ENCODE measurements at regions of chr5 and their contacts with region 1.

Region 1: DNA sequence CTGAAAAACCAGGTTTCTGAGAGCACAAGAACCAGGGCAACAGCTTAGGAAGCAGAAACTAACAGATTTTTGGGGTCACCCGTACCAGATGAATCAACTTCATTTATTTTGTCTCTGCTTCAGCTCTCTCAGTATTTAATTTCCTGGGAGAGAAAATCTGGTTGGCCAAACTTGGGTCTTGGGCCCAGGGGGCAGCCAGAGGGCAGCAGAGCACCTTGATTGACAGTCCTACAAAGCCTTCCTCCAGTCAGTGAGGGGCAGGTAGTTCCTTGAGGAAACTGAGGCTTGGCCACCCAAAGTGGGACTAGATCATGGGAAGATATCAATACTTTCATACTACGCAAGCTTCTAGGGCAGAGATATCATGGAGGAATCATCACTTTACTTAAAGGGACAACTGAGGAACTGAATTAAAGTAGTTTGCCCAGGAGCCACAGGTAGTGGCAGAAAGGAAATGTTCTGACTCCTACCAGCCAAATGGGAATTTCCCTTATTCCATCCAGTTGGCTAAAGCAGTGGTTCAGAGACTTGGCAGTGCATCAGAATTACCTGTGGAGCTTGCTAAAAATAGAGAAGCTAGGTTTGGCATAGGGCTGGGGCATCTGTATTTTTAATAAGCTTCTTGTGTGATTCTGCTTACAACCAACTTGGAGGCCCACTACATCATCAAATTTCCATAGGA is 21.5 kb upstream of the ARHGAP26 start:
- DNase-seq: peak in 1 of 2 experiments; percentile 66
- H3K4me3 ChIP-seq: no peak overlapping the region
- H3K27ac ChIP-seq: no peak overlapping the region
- H3K4me1 ChIP-seq: peaks cover 0 to under 1% (median under 1%) of the 10 kb centered on the region in 4 experiments; a peak in 1 of 7 replicates
- H3K27me3 ChIP-seq: no peaks in the 10 kb centered on the region
- CTCF ChIP-seq: peak; percentile 77 to 95 (median 82)
- EP300 ChIP-seq: no peak
- POLR2A ChIP-seq: no peak
- RAD21 ChIP-seq: peak; percentile 94 to 96

Region 2: GRCh38 chr5:142644640-142645361 is 103.9 kb before region 1 on chr5:
- CTCF ChIA-PET with region 1: no interaction called
- POLR2A ChIA-PET with region 1: no interaction called
- DNase-seq: no peak
- H3K4me3 ChIP-seq: no peak overlapping the region
- H3K27ac ChIP-seq: no peak overlapping the region
- H3K4me1 ChIP-seq: no peaks in the 10 kb centered on the region
- H3K27me3 ChIP-seq: no peaks in the 10 kb centered on the region
- CTCF ChIP-seq: no peak
- EP300 ChIP-seq: no peak
- POLR2A ChIP-seq: no peak
- RAD21 ChIP-seq: no peak

Region 3: GRCh38 chr5:142669477-142669876 is 79.2 kb before region 1 on chr5:
- CTCF ChIA-PET with region 1: no interaction called
- POLR2A ChIA-PET with region 1: no interaction called
- DNase-seq: no peak
- H3K4me3 ChIP-seq: no peak overlapping the region
- H3K27ac ChIP-seq: no peak overlapping the region
- H3K4me1 ChIP-seq: peaks cover 0 to 4% (median 0%) of the 10 kb centered on the region in 4 experiments; a peak in 1 of 7 replicates
- H3K27me3 ChIP-seq: no peaks in the 10 kb centered on the region; a peak in 3 of 7 replicates
- CTCF ChIP-seq: no peak
- EP300 ChIP-seq: no peak
- POLR2A ChIP-seq: no peak
- RAD21 ChIP-seq: no peak

Region 4: DNA sequence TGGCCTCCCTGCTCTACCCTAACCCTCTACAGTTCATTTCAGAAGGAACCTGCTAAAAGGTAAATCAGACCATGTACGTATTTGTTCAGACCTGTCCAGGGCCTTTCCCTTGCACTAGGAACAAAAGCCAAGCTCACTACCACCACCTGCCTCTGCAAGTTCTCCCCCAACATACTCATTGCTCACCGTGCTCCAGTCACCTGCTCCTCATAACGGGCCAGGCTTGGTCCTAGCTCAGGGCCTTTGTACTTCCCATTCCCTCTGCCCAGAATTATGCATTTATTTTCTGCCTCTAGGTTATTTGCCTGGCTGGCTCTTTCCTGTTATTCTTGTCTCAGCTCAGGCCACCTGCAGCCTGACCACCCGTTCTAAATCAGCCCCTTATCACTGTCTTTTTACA is 58.0 kb before region 1 on chr5:
- CTCF ChIA-PET with region 1: no interaction called
- POLR2A ChIA-PET with region 1: no interaction called
- DNase-seq: no peak
- H3K4me3 ChIP-seq: no peak overlapping the region
- H3K27ac ChIP-seq: no peak overlapping the region
- H3K4me1 ChIP-seq: peaks cover 0 to 16% (median 8%) of the 10 kb centered on the region in 4 experiments; a peak in 6 of 7 replicates
- H3K27me3 ChIP-seq: no peaks in the 10 kb centered on the region
- CTCF ChIP-seq: no peak
- EP300 ChIP-seq: no peak
- POLR2A ChIP-seq: no peak
- RAD21 ChIP-seq: no peak

Region 5: DNA sequence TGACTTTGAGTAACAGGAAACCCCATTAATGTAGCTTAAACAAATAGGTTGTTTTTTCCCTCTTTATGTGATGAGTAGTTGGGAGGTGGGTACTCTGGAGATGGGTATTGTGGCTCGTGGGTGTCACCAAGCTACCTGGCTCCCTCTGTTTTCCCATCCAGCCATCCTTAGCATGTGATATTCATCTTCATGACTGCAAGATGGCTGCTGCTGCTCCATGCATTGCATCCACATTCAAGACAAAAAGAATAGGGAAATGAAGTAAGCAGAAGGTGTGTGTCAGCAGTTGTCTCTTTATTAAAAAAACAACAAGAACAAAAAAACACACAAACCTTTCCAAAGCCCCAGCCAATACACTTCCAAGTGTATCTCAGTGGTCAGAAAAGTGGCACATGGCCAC is 15.0 kb after region 1 on chr5:
- CTCF ChIA-PET with region 1: interaction called, 99 read pairs
- POLR2A ChIA-PET with region 1: no interaction called
- DNase-seq: no peak
- H3K4me3 ChIP-seq: no peak overlapping the region
- H3K27ac ChIP-seq: no peak overlapping the region
- H3K4me1 ChIP-seq: no peaks in the 10 kb centered on the region
- H3K27me3 ChIP-seq: no peaks in the 10 kb centered on the region
- CTCF ChIP-seq: no peak
- EP300 ChIP-seq: no peak
- POLR2A ChIP-seq: no peak
- RAD21 ChIP-seq: no peak

Region 6: GRCh38 chr5:142783601-142784341 is 35.1 kb after region 1 on chr5:
- CTCF ChIA-PET with region 1: interaction called, 23 read pairs
- POLR2A ChIA-PET with region 1: no interaction called
- DNase-seq: no peak
- H3K4me3 ChIP-seq: no peak overlapping the region
- H3K27ac ChIP-seq: no peak overlapping the region
- H3K4me1 ChIP-seq: peaks cover 14 to 25% (median 17%) of the 10 kb centered on the region in 4 experiments
- H3K27me3 ChIP-seq: no peaks in the 10 kb centered on the region
- CTCF ChIP-seq: no peak
- EP300 ChIP-seq: no peak
- POLR2A ChIP-seq: no peak
- RAD21 ChIP-seq: no peak

Region 7: DNA sequence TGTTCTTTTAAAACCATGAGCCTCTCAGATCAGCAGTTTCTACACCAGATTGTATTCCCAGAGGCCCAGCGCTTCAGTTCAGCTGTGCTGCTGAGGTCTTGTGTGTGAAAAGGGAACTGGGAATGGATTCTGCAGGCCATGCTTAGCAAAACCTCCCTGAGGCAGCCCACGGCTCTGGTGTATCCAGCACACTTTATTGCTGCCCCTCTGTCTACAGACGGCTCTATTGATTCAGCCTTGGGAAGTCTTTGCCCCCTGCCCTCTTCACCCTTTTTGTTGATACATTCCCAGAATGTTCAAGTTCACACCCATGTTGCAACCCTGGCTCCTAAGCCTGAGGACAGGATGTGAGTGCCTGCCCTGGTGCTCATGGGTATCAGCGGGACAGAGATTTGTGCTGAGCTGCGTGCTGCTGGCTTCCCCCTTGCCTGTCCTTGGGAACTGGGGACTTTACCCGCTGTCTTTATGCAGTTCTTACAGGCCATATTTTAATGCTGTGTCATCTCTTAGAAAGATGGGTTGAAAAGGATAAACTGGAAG is 58.7 kb after region 1 on chr5:
- CTCF ChIA-PET with region 1: interaction called, 10 read pairs
- POLR2A ChIA-PET with region 1: no interaction called
- DNase-seq: no peak
- H3K4me3 ChIP-seq: no peak overlapping the region
- H3K27ac ChIP-seq: no peak overlapping the region
- H3K4me1 ChIP-seq: peaks cover 2 to 12% (median 7%) of the 10 kb centered on the region in 4 experiments; a peak in 4 of 7 replicates
- H3K27me3 ChIP-seq: no peaks in the 10 kb centered on the region; a peak in 1 of 7 replicates
- CTCF ChIP-seq: no peak
- EP300 ChIP-seq: no peak
- POLR2A ChIP-seq: no peak
- RAD21 ChIP-seq: no peak

Region 8: GRCh38 chr5:142881076-142881783 is 132.5 kb after region 1 on chr5:
- CTCF ChIA-PET with region 1: interaction called, 632 read pairs
- POLR2A ChIA-PET with region 1: interaction called, 3 read pairs
- DNase-seq: no peak
- H3K4me3 ChIP-seq: peak overlapping the region in 1 of 4 experiments; percentile 29; a peak in 1 of 8 replicates
- H3K27ac ChIP-seq: 0 out of 2 replicates have a peak overlapping the region, but pooled peaks have one; percentile 6
- H3K4me1 ChIP-seq: peaks cover 10 to 22% (median 15%) of the 10 kb centered on the region in 4 experiments
- H3K27me3 ChIP-seq: no peaks in the 10 kb centered on the region
- CTCF ChIP-seq: no peak
- EP300 ChIP-seq: no peak
- POLR2A ChIP-seq: no peak
- RAD21 ChIP-seq: no peak

Region 9: GRCh38 chr5:142900927-142901326 is 152.2 kb after region 1 on chr5:
- CTCF ChIA-PET with region 1: interaction called, 10 read pairs
- POLR2A ChIA-PET with region 1: no interaction called
- DNase-seq: no peak
- H3K4me3 ChIP-seq: no peak overlapping the region
- H3K27ac ChIP-seq: no peak overlapping the region; the same call in 1 of the 2 replicates
- H3K4me1 ChIP-seq: peaks cover 5 to 14% (median 11%) of the 10 kb centered on the region in 4 experiments; a peak in 6 of 7 replicates
- H3K27me3 ChIP-seq: no peaks in the 10 kb centered on the region
- CTCF ChIP-seq: no peak
- EP300 ChIP-seq: no peak
- POLR2A ChIP-seq: no peak
- RAD21 ChIP-seq: no peak

Region 10: GRCh38 chr5:142915813-142916424 is 167.2 kb after region 1 on chr5:
- CTCF ChIA-PET with region 1: interaction called, 89 read pairs
- POLR2A ChIA-PET with region 1: no interaction called
- DNase-seq: peak; percentile 38 to 66
- H3K4me3 ChIP-seq: no peak overlapping the region
- H3K27ac ChIP-seq: no peak overlapping the region
- H3K4me1 ChIP-seq: no peaks in the 10 kb centered on the region
- H3K27me3 ChIP-seq: no peaks in the 10 kb centered on the region
- CTCF ChIP-seq: peak; percentile 76 to 89 (median 85)
- EP300 ChIP-seq: no peak
- POLR2A ChIP-seq: no peak
- RAD21 ChIP-seq: peak; percentile 75 to 83